ENCODE measurements at regions of chr1 and their contacts with region 1.

Region 1: GRCh38 chr1:165597883-165598675 is 33.0 kb upstream of the MGST3 start:
- DNase-seq: peak; percentile 86
- H3K4me3 ChIP-seq: peak overlapping the region; percentile 63
- H3K27me3 ChIP-seq: peaks cover 10% of the 10 kb centered on the region
- CTCF ChIP-seq: no peak

Region 2: GRCh38 chr1:165367375-165367993 is 230.6 kb before region 1 on chr1:
- CTCF ChIA-PET with region 1: interaction called, 59 read pairs
- POLR2A ChIA-PET with region 1: no interaction called
- DNase-seq: no peak
- H3K4me3 ChIP-seq: no peak overlapping the region
- H3K27me3 ChIP-seq: no peaks in the 10 kb centered on the region; the same call in none of the 2 replicates
- CTCF ChIP-seq: peak; percentile 95

Region 3: DNA sequence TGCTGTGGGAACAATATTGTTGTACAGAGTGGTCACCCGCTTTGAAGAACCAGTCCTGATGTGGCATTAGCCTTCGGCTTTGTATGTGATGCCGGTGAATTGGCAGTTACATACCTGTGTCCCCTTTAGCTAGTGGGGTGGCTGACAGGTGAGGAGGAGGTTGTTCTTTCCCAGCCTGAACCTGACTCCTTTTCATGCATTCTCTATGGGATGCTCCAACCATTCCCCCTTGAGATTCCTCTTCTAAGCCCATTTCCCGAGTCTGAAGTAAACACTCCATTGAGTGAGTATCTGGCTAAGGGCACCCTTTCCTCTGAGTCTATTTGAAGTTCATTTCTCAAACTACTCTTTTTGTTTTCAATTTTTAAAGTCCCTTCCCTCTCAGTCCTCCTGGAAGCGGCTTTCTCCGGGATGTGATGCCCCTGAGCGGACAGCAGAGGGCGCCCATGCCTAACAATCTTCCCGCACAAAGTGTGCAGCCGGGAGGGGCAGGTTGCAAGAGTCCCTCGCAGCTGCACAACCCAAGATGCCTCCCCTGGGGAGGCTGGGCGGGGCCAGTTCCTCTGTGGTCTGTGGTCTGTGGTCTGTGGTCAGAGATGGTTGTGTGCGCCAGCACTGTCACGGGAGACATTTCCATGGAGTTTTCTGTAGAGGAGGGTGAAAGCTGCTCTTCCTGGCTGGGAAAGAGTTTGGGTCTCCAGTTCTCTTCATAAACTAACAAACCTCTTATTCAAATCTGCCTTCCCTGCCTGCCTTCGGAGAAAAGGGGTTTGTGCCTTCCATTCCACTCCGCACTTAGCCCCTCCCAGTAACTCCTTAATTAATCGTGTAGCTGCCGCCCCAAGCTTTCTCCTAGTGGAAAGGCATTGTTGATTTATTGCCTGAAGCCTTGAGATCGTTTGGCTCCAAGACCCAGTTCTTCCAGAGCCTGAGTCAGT is 205.2 kb before region 1 on chr1:
- CTCF ChIA-PET with region 1: interaction called, 236 read pairs
- POLR2A ChIA-PET with region 1: interaction called, 3 read pairs
- DNase-seq: peak; percentile 60
- H3K4me3 ChIP-seq: no peak overlapping the region
- H3K27me3 ChIP-seq: peaks cover 19% of the 10 kb centered on the region
- CTCF ChIP-seq: peak; percentile 96

Region 4: DNA sequence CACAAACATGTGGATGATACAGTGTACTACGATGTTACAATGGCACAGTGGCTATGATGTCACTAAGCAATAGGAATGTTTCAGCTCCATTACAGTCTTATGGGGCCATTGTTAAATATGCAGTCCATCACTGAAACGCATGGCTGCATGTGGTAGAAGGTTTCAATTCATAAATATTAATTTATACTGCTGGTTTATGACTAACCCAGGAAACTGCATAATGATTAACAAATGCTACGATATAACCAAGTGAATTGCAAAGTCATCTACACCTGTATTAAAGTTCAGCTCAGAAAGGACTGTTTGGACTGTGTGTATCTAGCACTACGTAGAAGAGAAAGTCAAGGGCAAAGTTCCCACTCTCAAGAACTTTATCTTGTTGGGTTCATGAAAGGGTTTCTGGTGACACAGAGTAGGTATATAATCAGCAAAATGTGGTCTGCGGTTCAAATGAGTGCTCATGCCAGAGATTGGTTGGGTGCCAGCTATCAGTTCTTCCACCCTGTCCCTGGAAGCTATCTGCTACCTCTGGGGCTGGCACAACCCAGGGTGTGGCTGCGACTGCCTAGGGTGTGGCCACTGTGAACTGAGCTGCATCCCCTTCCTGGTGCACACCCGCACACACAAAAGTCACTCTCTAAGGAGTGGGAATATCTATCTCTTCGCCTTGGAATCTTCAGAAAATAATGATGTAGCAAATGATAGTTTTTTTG is 47.7 kb after region 1 on chr1:
- CTCF ChIA-PET with region 1: no interaction called
- POLR2A ChIA-PET with region 1: no interaction called
- DNase-seq: no peak
- H3K4me3 ChIP-seq: no peak overlapping the region
- H3K27me3 ChIP-seq: no peaks in the 10 kb centered on the region
- CTCF ChIP-seq: no peak

Region 5: DNA sequence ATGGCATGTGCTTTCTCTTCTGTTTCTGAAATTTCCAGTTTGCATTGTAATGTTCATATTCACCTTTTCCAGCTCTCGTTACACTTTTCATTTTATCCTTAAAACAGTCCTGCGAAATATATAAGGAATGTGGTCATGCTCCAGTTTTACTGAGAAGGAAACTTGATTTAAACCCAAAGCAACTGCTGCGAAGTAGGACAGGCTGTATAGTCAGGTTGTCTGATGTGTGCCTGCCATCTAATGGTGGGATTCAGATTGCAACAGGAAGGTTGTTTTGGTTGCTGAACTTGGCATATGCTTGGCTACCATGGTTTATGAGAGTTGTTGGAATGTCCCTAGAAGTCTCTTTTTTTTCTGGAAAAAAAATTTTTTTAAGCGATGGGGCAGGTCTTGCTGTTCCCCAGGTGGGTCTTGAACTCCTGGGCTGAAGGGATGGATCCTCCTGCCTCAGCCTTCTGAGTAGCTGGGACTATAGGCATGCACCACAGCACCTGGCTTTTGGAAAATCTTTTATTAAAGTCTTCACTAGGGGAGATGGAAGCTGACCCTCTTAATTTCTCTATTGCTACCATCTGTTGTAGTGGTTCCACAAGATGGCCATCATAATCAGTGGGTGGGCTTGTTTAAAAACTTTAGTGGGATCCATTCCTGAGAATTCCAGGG is 316.2 kb after region 1 on chr1:
- CTCF ChIA-PET with region 1: interaction called, 42 read pairs
- POLR2A ChIA-PET with region 1: no interaction called
- DNase-seq: no peak
- H3K4me3 ChIP-seq: no peak overlapping the region
- H3K27me3 ChIP-seq: no peaks in the 10 kb centered on the region
- CTCF ChIP-seq: peak; percentile 83

Measured in BJ (cell line).